GM13976 (cell line): ENCODE measurements at regions of chr1 and their contacts with region 1.

Region 1: DNA sequence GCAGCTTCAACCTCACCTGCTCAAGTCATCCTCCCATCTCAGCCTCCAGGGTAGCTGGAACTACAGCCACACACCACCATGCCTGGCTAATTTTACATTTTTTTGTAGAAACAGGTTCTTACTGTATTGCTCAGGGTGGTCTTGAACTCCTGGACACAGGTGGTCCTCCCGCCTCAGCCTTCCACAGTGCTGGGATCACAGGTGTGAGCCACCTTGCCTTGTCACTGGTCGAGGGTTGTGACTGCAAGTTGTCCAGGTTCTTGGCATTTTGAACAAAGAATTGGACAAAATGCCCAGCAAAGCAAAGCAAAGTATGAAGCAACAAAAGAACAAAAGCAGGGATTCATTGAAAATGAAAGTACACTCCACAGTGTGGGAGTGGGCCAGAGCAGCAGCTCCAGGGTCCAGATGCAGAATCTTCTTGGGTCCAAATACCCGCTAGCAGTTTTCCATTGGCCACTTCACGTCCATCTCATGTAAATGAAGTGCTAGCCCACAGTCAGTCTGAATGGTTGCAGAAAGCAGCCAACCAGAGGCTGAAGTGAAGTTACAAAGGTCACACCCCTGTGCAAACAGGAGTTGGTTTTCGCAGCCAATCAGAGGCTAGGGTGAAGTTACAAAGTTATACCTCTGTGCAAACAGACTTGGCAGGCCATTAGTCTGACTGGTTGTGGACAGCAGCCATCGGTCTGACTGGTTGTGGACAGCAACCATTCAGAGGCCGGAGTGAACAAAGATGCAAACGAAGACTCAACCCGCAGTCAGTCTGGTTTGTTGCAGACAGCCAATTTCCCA is 109.5 kb upstream of the KIF26B start:
- DNase-seq: no peak
- CTCF ChIP-seq: no peak

Region 2: GRCh38 chr1:244599937-244600350 is 445.3 kb before region 1 on chr1:
- in situ Hi-C with region 1: loop called (anchors 10 kb)
- DNase-seq: peak; percentile 77
- CTCF ChIP-seq: no peak